ENCODE measurements at regions of chr9 and their contacts with region 1.

Region 1: DNA sequence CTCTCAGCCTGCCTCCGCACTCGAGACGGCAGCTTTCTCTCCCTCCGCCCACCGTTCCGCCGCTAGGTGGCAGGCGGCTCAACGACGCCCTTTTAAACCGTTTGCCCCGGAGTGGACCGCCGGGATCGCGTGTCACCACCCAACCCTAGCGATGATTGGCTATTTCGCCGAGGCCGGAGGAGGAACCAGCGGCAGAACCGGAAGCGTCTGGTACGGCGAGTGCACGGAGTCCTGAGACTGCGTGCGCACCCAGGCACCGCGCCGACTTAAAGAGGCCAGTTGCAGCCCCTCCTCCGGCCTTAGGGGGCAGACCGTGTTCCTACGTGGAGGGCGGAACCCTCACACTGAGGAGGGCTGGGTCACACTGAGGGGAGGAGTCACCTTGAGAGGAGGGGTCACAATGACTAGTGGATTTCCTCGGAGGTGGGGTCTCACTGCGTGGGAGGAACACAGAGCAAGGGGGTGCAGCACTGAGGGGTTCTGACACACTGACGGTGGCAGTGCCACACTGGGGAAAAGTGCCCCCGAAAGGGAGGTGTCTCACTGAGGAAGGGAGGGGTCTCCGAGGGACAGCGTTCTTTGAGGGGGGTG is 980 bp upstream of the TESK1 start:
- DNase-seq: peak; percentile 99 to 100
- H3K4me3 ChIP-seq: peak overlapping the region; percentile 92
- H3K4me3 Mint-ChIP-seq: peak overlapping the region; percentile 99
- H3K27ac Mint-ChIP-seq: peak overlapping the region; percentile 99
- H3K4me1 ChIP-seq: peaks cover 16% of the 10 kb centered on the region
- H3K4me1 Mint-ChIP-seq: peaks cover 23% of the 10 kb centered on the region
- H3K27me3 ChIP-seq: no peaks in the 10 kb centered on the region
- H3K27me3 Mint-ChIP-seq: no peaks in the 10 kb centered on the region
- CTCF ChIP-seq: peak; percentile 78 to 83

Region 2: DNA sequence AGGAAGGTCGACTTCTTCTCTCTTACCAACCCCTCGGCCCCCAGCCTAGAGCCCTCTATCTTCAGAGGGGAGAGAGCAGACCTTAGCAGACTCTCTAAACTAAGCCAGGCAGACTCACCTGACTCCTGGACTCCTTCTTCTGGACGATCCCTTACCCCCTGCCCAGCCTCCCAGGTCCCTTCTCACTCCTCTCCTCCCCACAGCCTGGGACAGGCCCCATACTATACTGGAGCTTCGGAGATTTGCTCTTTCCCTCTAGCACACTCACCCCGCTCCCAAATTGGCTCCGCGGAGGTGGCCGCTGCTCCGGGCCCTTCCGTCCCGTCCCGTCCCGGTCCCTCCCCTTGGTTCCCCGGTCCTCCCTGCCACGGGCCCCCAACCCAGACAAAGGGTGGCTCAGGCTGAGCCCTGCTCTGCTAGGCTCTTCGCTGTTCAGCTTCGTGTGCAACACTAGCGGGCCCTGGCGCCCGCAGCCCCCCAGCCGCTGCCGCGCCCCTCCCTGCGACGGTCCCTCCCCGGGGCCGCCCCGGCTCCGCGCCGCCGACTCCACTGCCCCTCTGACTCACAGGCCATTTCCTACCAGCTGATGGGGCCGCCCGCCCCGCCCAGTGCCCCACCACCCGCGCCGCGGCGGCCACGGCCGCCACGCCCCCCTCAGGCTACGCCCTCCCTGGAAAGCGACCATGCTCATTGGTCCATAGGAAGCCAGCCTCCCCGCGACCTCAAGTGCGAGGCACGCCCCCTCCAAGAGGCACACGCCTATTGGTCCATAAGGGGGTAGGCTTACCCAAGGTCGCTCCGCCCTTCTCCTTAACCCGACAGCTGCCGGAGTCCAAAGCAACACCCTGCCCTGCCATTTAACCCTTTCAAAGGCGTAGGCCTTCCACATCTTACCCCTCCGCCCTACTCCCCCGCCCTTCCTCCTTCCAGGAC is 492.8 kb before region 1 on chr9:
- CTCF ChIA-PET with region 1: no interaction called
- POLR2A ChIA-PET with region 1: no interaction called
- intact Hi-C with region 1: loop called (anchors 5 kb)
- DNase-seq: peak; percentile 98 to 99
- H3K4me3 ChIP-seq: peak overlapping the region; percentile 58
- H3K4me3 Mint-ChIP-seq: peak overlapping the region; percentile 77
- H3K27ac Mint-ChIP-seq: peak overlapping the region; percentile 59
- H3K4me1 ChIP-seq: peaks cover 26% of the 10 kb centered on the region
- H3K4me1 Mint-ChIP-seq: peaks cover 27% of the 10 kb centered on the region
- H3K27me3 ChIP-seq: no peaks in the 10 kb centered on the region
- H3K27me3 Mint-ChIP-seq: no peaks in the 10 kb centered on the region
- CTCF ChIP-seq: no peak

Region 3: DNA sequence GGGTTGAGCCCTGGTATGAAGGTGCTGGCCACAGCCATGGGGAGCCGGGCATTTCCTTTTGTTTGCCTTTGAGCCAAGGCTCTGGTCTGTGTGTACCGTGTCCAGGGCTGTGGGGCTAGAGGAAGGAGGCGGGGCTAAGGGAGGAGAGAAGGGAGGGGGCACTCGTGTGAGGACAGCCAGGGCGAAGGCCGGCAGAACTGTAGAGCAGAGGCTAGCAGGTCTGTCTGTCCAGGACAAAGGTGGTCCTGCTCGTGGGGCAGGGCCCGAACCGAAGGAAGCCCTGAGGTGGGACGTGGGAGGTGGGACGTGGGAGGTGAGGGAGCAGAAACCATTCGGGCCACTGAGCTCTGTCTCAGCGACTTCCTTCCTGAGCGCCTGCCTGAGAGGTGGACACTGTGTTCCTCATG is 40.3 kb before region 1 on chr9:
- CTCF ChIA-PET with region 1: interaction called, 4 read pairs
- POLR2A ChIA-PET with region 1: no interaction called
- intact Hi-C with region 1: loop called (anchors 5 kb)
- DNase-seq: no peak
- H3K4me3 ChIP-seq: no peak overlapping the region
- H3K4me3 Mint-ChIP-seq: no peak overlapping the region
- H3K27ac Mint-ChIP-seq: peak overlapping the region; percentile 58
- H3K4me1 ChIP-seq: no peaks in the 10 kb centered on the region
- H3K4me1 Mint-ChIP-seq: no peaks in the 10 kb centered on the region
- H3K27me3 ChIP-seq: no peaks in the 10 kb centered on the region
- H3K27me3 Mint-ChIP-seq: no peaks in the 10 kb centered on the region
- CTCF ChIP-seq: no peak

Region 4: DNA sequence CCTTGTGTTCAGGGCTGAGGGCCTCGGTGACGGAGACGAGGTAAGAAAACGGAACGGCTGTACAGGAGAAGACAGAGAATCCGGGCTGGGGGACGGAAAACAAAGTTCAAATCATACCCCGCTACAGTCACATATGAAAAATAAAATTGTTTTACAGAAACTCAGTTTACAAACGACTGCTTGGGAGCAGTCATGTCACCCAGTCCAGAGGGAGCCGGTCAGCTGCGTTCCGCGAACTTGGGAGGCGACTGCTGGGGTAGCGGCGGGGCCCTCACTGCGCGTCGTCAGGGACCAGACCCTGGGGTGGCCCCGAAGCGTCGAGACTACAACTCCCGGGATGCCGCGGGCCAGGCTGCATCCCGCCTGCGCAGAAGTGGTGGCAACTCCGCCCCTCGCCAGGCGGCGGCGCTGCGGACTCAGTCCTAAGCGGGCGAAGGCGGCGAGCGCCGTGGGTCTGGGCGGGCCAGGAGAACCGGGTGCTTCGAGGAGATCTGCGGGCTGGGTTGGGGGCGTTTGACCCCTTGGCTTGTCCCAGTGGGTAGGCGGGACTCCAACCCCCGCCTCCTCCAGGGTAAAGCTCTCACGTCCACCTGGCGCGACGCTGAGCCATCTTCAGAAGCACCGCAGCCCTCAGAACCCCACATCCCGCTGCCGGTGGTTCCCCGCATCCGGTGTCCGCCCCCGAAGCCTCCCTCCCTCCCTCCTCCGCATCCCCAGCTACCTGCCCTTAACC is 42.6 kb after region 1 on chr9:
- CTCF ChIA-PET with region 1: interaction called, 24 read pairs
- POLR2A ChIA-PET with region 1: interaction called, 5 read pairs
- intact Hi-C with region 1: loop called (anchors 1 kb)
- DNase-seq: peak; percentile 90 to 97
- H3K4me3 ChIP-seq: peak overlapping the region; percentile 46
- H3K4me3 Mint-ChIP-seq: peak overlapping the region; percentile 81
- H3K27ac Mint-ChIP-seq: peak overlapping the region; percentile 84
- H3K4me1 ChIP-seq: no peaks in the 10 kb centered on the region; the same call in 1 of the 2 replicates
- H3K4me1 Mint-ChIP-seq: peaks cover 10% of the 10 kb centered on the region
- H3K27me3 ChIP-seq: no peaks in the 10 kb centered on the region
- H3K27me3 Mint-ChIP-seq: no peaks in the 10 kb centered on the region
- CTCF ChIP-seq: peak; percentile 93 to 94

Region 5: GRCh38 chr9:36053971-36054370 is 449.9 kb after region 1 on chr9:
- CTCF ChIA-PET with region 1: no interaction called
- POLR2A ChIA-PET with region 1: no interaction called
- intact Hi-C with region 1: no loop called
- DNase-seq: no peak
- H3K4me3 ChIP-seq: no peak overlapping the region
- H3K4me3 Mint-ChIP-seq: no peak overlapping the region
- H3K27ac Mint-ChIP-seq: no peak overlapping the region
- H3K4me1 ChIP-seq: no peaks in the 10 kb centered on the region
- H3K4me1 Mint-ChIP-seq: peaks cover 7% of the 10 kb centered on the region
- H3K27me3 ChIP-seq: no peaks in the 10 kb centered on the region
- H3K27me3 Mint-ChIP-seq: no peaks in the 10 kb centered on the region
- CTCF ChIP-seq: no peak